ENCODE measurements at regions of chr3 and their contacts with region 1.

Region 1: GRCh38 chr3:31452495-31453106 is 80.1 kb upstream of the STT3B start:
- DNase-seq: no peak
- H3K4me3 ChIP-seq: no peak overlapping the region
- H3K27ac ChIP-seq: no peak overlapping the region
- H3K4me1 ChIP-seq: peaks cover 0 to 20% (median 11%) of the 10 kb centered on the region in 4 experiments
- H3K27me3 ChIP-seq: no peaks in the 10 kb centered on the region

Region 2: DNA sequence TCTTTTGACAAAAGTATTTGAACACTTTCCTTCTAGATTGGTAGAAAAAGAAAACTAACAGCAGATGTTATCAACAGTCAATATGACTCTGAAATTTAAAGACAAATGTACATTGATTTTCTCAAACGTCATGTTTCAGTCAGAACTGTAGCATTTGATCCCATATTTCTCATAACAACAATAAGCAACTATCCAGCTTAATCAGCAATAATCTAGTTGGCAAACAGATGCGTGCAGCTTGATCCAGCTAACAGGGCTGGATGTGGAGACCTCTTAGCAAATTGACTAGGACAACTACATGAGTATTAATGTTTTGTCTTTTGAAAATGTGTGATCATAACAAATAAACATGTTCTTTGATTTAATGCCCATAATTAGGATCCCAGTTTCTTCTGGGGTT is 13.9 kb before region 1 on chr3:
- CTCF ChIA-PET with region 1: interaction called, 10 read pairs
- POLR2A ChIA-PET with region 1: no interaction called
- DNase-seq: no peak
- H3K4me3 ChIP-seq: no peak overlapping the region
- H3K27ac ChIP-seq: no peak overlapping the region
- H3K4me1 ChIP-seq: peaks cover 9 to 29% (median 18%) of the 10 kb centered on the region in 4 experiments
- H3K27me3 ChIP-seq: no peaks in the 10 kb centered on the region

Region 3: GRCh38 chr3:31505371-31506048 is 52.9 kb after region 1 on chr3:
- CTCF ChIA-PET with region 1: no interaction called
- POLR2A ChIA-PET with region 1: no interaction called
- DNase-seq: peak in 1 of 3 donors; percentile 16
- H3K4me3 ChIP-seq: peak overlapping the region in 5 of 7 experiments; percentile 13 to 61 (median 48)
- H3K27ac ChIP-seq: no peak overlapping the region
- H3K4me1 ChIP-seq: peaks cover 5 to 31% (median 10%) of the 10 kb centered on the region in 4 experiments
- H3K27me3 ChIP-seq: no peaks in the 10 kb centered on the region

Measured in common myeloid progenitor, CD34-positive (primary cell).